ENCODE measurements at regions of chr9 and their contacts with region 1.

Region 1: DNA sequence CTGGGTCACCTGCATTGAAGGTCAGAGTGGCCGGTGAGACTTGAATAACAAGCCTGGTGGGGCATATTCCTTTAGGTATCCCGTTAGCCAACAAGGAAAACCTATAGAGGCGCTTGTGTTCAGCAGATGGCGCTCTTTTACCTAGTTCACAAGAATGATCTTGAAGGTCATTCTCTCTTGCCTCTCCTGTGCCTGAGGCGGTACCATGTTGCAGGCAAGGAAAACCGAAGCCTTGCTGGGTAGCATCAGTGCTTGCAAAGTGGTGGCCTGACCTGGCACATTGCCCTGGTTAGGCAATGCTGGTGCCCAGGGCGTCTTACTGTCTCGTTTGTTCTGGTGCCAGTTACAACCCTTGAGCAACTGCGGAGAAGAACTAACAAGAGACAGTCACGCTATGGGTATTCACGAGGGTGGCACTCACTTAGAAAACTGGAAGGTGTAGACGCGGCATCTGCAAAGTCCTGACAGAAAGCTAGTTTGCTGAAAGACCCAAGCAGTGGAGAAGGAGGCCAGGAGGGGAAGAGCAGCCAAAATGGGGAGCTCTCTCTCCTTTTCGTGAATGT is 56.7 kb downstream of the AOPEP start:
- DNase-seq: peak; percentile 69
- ATAC-seq: peak; percentile 94
- H3K4me3 ChIP-seq: no peak overlapping the region
- H3K27ac ChIP-seq: no peak overlapping the region
- H3K4me1 ChIP-seq: peaks cover 6 to 10% of the 10 kb centered on the region in 2 experiments; a peak in 3 of 4 replicates
- H3K27me3 ChIP-seq: no peaks in the 10 kb centered on the region
- CTCF ChIP-seq: peak; percentile 70 to 89 (median 72)
- POLR2A ChIP-seq: no peak
- RAD21 ChIP-seq: peak; percentile 95

Region 2: DNA sequence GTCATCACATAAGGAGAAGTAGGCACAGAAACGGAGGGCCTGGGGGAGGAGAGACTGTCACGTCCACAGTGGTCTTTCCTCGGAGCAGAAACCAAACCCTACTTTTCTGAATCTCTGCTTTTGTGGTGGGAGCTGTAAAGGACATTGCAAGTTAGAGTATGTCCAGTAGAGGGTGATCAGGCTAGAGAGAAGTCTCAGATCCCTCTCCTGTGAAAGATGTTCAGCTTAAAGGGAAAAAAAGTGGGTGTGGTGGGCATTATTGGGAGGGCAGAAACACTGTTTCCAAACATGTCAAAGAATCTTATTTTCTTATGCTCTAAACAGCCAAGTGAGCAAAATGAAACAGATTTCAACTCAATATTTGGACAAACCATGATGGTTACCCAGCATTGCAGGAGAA is 170.1 kb before region 1 on chr9:
- CTCF ChIA-PET with region 1: no interaction called
- POLR2A ChIA-PET with region 1: no interaction called
- RAD21 ChIA-PET with region 1: no interaction called
- intact Hi-C with region 1: no loop called
- DNase-seq: no peak
- ATAC-seq: peak; percentile 46; the same call in 1 of the 2 replicates
- H3K4me3 ChIP-seq: no peak overlapping the region
- H3K27ac ChIP-seq: no peak overlapping the region
- H3K4me1 ChIP-seq: no peaks in the 10 kb centered on the region
- H3K27me3 ChIP-seq: no peaks in the 10 kb centered on the region
- CTCF ChIP-seq: peak in 1 of 3 experiments; percentile 17; a peak in 1 of 6 replicates
- POLR2A ChIP-seq: no peak
- RAD21 ChIP-seq: no peak

Region 3: DNA sequence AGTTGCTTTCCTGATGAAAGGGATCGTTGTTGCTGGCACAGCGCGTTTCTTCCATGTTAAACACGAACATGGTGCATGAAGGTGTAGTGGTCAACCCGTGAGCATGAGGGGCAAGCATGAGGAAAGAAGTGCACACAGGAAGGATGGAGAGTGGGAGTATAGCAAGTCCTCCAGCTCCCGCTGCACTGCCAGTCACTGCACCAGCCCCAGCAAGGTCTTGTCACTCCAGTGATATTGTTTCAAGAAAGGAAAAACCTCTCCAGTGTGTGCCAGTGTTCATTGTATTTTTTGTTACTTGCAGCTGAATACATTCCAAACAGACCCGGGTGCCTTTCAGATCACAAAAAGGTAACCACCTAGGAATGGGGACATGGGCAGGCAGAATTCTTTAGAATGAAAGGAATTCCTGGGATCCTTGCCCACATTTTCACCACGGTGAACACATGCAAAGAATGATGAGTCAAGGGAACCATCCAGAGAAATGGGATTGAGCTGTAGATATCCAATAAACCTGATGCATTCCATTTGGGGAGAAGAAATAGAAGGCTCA is 129.6 kb after region 1 on chr9:
- CTCF ChIA-PET with region 1: no interaction called
- POLR2A ChIA-PET with region 1: no interaction called
- RAD21 ChIA-PET with region 1: no interaction called
- intact Hi-C with region 1: loop called (anchors 5 kb)
- DNase-seq: peak; percentile 78
- ATAC-seq: peak; percentile 71
- H3K4me3 ChIP-seq: peak overlapping the region; percentile 4 to 42; a peak in 3 of 4 replicates
- H3K27ac ChIP-seq: peak overlapping the region; percentile 61
- H3K4me1 ChIP-seq: peaks cover 73 to 83% of the 10 kb centered on the region in 2 experiments
- H3K27me3 ChIP-seq: no peaks in the 10 kb centered on the region
- CTCF ChIP-seq: no peak
- POLR2A ChIP-seq: no peak
- RAD21 ChIP-seq: peak; percentile 37

Region 4: DNA sequence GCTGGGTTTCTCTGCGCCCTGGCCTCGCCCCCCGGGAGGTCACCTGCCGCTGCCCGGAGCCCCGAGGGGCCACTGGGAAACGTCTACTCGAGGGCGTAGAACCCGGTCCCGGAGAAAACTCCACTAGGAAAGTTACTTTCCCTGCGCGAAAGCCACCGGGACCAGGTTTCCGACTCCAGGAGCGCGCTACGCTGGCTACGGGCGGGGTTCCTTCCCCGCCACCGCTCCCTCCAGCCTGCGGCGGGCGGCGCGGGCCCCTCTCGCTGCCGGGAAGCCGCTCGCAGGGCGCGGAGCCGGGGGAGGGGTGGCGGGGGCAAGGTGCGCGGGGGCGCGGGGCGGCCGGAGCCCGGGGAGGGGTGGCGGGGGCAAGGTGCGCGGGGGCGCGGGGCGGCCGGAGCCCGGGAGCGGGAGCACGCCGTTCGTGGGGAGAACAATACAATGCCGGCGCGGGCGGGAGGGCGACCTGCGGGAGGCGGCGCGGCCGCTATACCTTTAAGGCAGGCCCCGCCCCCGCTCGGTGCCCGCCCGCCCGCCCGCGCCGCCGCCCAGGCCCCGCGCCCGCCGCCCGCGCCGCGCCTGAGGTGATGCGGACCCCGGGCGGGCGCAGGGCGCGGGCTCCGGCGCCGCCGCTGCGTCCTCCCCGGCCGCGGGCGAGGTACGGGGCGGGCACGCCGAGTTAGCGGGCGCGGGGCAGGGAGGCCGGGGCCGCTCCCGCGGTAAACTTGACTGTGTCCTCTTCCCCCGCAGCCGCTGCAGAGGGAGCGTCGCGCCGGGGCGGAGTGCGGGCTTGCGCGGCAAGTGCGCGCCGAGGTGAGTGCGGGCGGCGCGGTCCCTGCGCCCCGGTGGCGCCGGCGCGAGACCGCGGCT is 221.5 kb after region 1 on chr9:
- CTCF ChIA-PET with region 1: no interaction called
- POLR2A ChIA-PET with region 1: no interaction called
- RAD21 ChIA-PET with region 1: interaction called in 1 of 2 experiments, 3 read pairs
- intact Hi-C with region 1: loop called (anchors 5 kb)
- DNase-seq: no peak
- ATAC-seq: peak; percentile 84
- H3K4me3 ChIP-seq: peak overlapping the region; percentile 70 to 73
- H3K27ac ChIP-seq: peak overlapping the region; percentile 75
- H3K4me1 ChIP-seq: peaks cover 6 to 22% of the 10 kb centered on the region in 2 experiments
- H3K27me3 ChIP-seq: no peaks in the 10 kb centered on the region
- CTCF ChIP-seq: no peak
- POLR2A ChIP-seq: no peak
- RAD21 ChIP-seq: no peak

Region 5: DNA sequence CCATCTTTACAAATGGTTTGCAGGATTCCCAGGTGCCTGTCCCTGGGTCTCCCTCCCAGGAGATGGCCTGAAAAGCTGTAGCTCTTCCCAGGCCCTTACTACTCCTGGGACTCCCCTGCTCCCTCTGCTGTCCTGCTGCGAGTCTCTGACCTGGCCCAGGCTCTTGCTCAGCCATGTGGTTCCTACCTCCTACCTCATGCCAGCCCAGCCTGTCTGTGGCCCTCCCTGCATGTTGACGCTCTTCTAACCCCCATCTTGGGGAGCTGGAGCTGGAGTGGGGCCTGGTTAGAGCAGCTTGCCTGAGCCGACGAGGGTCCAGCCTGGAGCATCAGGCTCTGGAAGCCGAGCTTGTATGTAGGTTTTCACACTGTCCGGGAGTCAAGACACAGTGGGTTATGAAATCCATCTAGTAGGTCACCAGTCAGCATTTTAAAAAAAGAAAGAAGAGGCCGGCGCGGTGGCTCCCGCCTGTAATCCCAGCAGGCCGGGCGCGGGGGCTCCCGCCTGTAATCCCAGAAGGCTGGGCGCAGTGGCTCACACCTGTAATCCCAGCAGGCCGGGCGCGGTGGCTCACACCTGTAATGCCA is 289.9 kb after region 1 on chr9:
- CTCF ChIA-PET with region 1: interaction called, 4 read pairs
- POLR2A ChIA-PET with region 1: no interaction called
- RAD21 ChIA-PET with region 1: no interaction called
- intact Hi-C with region 1: loop called (anchors 2 kb)
- DNase-seq: no peak
- ATAC-seq: peak; percentile 93
- H3K4me3 ChIP-seq: no peak overlapping the region
- H3K27ac ChIP-seq: no peak overlapping the region
- H3K4me1 ChIP-seq: no peaks in the 10 kb centered on the region
- H3K27me3 ChIP-seq: no peaks in the 10 kb centered on the region
- CTCF ChIP-seq: peak; percentile 33 to 41 (median 37); a peak in 4 of 6 replicates
- POLR2A ChIP-seq: no peak
- RAD21 ChIP-seq: peak; percentile 60